ENCODE measurements at regions of chr5 and their contacts with region 1.

Region 1: GRCh38 chr5:88680253-88681132 is 202.5 kb downstream of the MEF2C start:
- DNase-seq: peak; percentile 72
- H3K4me3 ChIP-seq: peak overlapping the region; percentile 27
- H3K27ac ChIP-seq: no peak overlapping the region
- H3K4me1 ChIP-seq: peaks cover 13% of the 10 kb centered on the region
- CTCF ChIP-seq: peak; percentile 88

Region 2: DNA sequence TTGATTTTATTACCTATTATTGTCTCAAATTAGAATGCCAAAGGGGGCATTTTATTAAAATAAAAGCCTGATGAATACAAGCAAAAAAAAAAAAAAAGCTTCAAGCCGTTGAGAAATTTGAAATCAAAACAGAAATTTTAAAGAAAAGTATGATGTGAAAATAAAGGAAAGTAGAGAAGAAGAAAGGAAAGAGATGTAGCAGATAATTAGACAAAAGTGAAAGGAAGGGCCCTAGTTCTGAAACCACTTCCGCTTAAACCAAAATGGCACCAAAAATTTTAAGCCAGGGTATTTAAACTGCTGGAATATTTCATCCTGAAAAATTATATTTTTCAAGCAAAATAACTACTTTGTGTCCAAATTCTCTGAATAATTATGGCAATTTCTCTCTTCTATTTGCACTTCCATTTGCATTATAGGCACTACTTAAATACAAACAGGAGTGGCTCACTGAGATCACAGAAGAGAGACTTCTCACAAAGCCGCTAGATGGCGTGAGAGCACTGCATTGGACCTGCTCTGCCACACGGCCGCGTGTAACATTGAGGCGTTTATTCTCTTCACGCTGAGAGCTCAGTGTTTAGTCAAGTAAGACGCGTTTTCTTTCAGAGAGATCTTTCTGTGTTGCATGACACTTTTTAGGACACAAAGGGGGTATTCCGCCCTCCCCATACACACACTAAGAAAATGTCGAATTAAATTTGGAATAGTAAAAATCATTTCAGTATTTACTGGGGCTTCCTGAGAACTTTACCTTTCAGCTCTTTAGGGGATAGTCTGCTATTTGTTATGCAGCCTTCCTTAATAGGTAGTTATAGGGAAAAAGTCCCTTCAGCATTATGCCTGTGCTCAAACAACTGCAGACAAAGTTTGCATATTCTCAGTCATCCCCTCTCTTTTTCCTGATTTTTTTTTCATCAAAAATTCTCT is 899.4 kb before region 1 on chr5:
- CTCF ChIA-PET with region 1: interaction called, 3 read pairs
- POLR2A ChIA-PET with region 1: no interaction called
- intact Hi-C with region 1: loop called (anchors 2 kb)
- DNase-seq: peak; percentile 83
- H3K4me3 ChIP-seq: no peak overlapping the region
- H3K27ac ChIP-seq: no peak overlapping the region
- H3K4me1 ChIP-seq: no peaks in the 10 kb centered on the region
- CTCF ChIP-seq: peak; percentile 95

Region 3: GRCh38 chr5:88226881-88227450 is 453.5 kb before region 1 on chr5:
- CTCF ChIA-PET with region 1: no interaction called
- POLR2A ChIA-PET with region 1: interaction called, 12 read pairs
- intact Hi-C with region 1: no loop called
- DNase-seq: no peak
- H3K4me3 ChIP-seq: no peak overlapping the region
- H3K27ac ChIP-seq: no peak overlapping the region
- H3K4me1 ChIP-seq: no peaks in the 10 kb centered on the region
- CTCF ChIP-seq: no peak

Region 4: GRCh38 chr5:88502179-88503040 is 178.1 kb before region 1 on chr5:
- CTCF ChIA-PET with region 1: interaction called, 6 read pairs
- POLR2A ChIA-PET with region 1: interaction called, 3 read pairs
- intact Hi-C with region 1: loop called (anchors 5 kb)
- DNase-seq: peak; percentile 61
- H3K4me3 ChIP-seq: peak overlapping the region; percentile 65
- H3K27ac ChIP-seq: no peak overlapping the region
- H3K4me1 ChIP-seq: peaks cover 17% of the 10 kb centered on the region
- CTCF ChIP-seq: no peak

Region 5: DNA sequence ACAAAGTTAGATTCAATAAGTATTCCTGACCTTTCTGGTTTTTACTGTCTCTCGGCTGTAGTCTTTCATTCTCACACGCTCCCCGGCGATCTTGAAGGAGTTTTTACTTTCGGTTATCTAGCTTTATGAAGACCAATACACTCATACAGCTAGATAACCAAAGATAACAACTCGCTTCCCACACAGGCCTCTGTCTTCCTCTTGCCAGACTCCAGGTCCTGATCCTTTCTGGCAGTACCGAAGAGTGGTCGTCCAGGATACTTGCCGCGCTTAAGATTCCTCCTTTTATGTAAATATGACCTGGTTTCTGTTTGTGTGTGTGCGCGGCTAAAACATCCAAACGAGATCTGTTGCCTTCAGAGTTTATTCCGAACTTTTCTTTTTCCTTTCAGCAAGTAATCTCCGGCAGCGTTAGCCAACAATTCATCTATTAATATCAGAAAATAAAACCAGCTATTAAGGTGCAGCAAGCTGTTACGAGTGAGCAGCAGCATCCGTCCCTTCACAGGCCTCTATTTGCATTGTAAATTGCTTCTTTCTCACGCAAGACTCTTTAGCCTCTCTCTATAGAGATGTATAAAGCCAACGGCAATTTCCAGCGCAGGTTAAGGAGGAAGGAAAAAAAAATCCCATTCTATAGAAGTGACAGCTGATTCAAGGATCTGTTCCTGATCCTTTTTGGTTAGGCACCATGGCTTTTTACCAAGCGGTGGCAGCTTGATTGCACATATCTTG is 13.6 kb before region 1 on chr5:
- CTCF ChIA-PET with region 1: no interaction called
- POLR2A ChIA-PET with region 1: interaction called, 16 read pairs
- intact Hi-C with region 1: no loop called
- DNase-seq: peak; percentile 31
- H3K4me3 ChIP-seq: peak overlapping the region; percentile 67
- H3K27ac ChIP-seq: no peak overlapping the region
- H3K4me1 ChIP-seq: peaks cover 28% of the 10 kb centered on the region
- CTCF ChIP-seq: no peak

Region 6: DNA sequence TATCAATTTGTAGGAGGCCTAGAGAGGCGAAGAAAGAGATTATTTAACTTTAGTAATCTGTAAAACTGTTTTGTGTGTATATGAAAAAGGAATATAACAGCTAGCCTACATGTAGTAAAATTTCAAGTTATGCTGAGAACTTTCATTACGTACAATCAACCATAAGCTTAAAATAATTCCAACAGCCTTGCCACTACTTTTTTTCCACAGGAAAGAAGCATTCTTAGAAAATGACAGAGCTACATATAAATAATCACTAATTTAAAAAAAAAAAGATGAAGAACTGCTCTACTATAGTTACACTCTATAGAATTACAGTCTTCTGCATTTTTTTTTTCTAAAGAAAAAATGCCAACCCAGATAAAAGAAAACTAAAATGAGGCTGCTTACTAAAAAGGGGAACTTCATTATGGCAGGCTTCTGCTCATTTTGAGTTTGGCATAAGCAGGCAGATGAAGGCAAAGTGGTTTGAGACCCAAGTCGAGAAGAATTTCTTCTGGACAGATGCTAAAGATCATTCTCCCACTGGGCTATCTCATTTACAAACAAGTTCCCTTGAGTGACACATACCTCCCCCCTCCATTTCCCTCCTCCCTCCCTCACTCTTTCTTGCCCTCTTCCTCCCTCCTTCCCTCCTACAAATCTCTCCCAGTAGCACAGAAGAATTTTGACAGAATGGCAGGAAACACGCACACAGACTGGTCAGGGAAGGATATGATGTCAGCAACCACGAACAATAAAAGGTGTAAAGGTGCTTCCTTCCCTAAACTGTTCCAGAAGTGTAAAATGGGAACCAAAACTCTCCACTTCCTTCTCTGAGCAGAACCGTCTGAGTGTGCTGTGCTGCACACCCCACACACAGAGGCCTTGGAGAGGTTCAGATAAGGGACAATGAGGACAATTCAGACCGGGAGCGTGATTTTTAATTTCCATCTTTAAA is 146.4 kb after region 1 on chr5:
- CTCF ChIA-PET with region 1: no interaction called
- POLR2A ChIA-PET with region 1: interaction called, 6 read pairs
- intact Hi-C with region 1: loop called (anchors 2 kb)
- DNase-seq: peak; percentile 83
- H3K4me3 ChIP-seq: peak overlapping the region; percentile 54
- H3K27ac ChIP-seq: peak overlapping the region; percentile 78
- H3K4me1 ChIP-seq: peaks cover 89% of the 10 kb centered on the region
- CTCF ChIP-seq: no peak

Region 7: GRCh38 chr5:88952344-88952743 is 271.9 kb after region 1 on chr5:
- CTCF ChIA-PET with region 1: no interaction called
- POLR2A ChIA-PET with region 1: no interaction called
- intact Hi-C with region 1: no loop called
- DNase-seq: peak; percentile 4
- H3K4me3 ChIP-seq: no peak overlapping the region
- H3K27ac ChIP-seq: no peak overlapping the region
- H3K4me1 ChIP-seq: peaks cover 13% of the 10 kb centered on the region
- CTCF ChIP-seq: no peak

Region 8: DNA sequence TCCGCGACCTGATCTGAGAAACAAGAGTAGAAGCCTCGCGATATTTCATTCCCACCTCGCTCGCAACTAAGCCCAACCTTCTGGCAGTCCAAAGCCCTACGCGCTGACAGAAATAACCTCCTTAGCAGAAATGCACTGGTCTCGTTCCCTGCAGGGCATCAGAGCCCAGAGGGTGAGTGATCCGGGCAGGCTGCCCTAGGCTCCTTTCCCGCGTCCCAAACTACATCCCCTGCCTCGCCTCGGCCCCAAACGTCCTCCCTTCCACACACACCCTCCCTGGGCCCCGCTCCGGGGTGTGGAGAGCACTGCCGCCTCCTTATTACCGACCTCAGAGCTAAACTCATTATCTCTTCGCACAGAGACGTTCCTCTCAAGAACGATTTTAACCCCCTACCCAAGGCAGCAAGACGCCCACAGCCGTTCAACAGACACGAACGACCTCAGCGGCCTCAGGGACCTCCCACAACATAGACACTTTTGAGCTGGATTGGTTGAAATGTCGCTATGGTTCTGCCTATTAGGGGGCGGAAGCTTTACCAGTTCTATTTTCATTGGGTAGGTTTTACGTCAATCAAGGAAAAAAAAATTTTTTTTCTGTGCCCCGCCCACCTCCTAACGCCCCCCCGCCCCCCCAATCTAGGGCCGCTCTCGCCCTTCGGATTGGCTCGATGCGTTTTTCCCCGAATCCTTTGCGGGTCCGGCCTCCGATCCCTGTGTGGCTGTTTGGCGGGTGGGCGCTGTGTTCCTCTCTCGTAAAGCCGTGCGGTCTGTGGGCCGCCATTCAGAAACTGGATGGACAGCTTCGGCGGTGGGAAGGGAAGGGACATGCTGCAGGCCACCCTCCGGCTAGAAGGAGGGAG is 1729.1 kb after region 1 on chr5 and contains the start of gene CETN3:
- CTCF ChIA-PET with region 1: no interaction called
- POLR2A ChIA-PET with region 1: interaction called, 4 read pairs
- intact Hi-C with region 1: loop called (anchors 5 kb)
- DNase-seq: peak; percentile 96
- H3K4me3 ChIP-seq: peak within 1 kb of the TSS; percentile 91
- H3K27ac ChIP-seq: peak within 1 kb of the TSS; percentile 90
- H3K4me1 ChIP-seq: peaks cover 29% of the 10 kb centered on the region
- CTCF ChIP-seq: no peak
- total RNA-seq, gene CETN3: 34.6 and 43.2 TPM in 2 replicates